Right lobe of liver (tissue), 6 donors: ENCODE measurements at regions of chr17 and their contacts with region 1.

Region 1: GRCh38 chr17:42405963-42406495 is 17.0 kb downstream of the CAVIN1 start:
- DNase-seq: peak; percentile 80 to 85 (median 82)
- ATAC-seq: peak; percentile 73 to 80 (median 76)
- H3K4me3 ChIP-seq: no peak overlapping the region
- H3K27ac ChIP-seq: no peak overlapping the region
- H3K4me1 ChIP-seq: peaks cover 0 to 12% (median 6%) of the 10 kb centered on the region in 4 donors
- H3K27me3 ChIP-seq: no peaks in the 10 kb centered on the region
- CTCF ChIP-seq: peak; percentile 79 to 90 (median 88)
- POLR2A ChIP-seq: no peak

Region 2: GRCh38 chr17:42312285-42313130 is 93.5 kb before region 1 on chr17:
- intact Hi-C with region 1: loop called in 1 of 2 experiments (anchors 10 kb)
- DNase-seq: peak; percentile 87 to 92 (median 88)
- ATAC-seq: peak; percentile 73 to 87 (median 80)
- H3K4me3 ChIP-seq: no peak overlapping the region
- H3K27ac ChIP-seq: peak overlapping the region in 2 of 3 donors; percentile 39 to 68
- H3K4me1 ChIP-seq: peaks cover 0 to 25% (median 11%) of the 10 kb centered on the region in 4 donors
- H3K27me3 ChIP-seq: no peaks in the 10 kb centered on the region
- CTCF ChIP-seq: peak; percentile 39 to 77 (median 67)
- POLR2A ChIP-seq: no peak

Region 3: DNA sequence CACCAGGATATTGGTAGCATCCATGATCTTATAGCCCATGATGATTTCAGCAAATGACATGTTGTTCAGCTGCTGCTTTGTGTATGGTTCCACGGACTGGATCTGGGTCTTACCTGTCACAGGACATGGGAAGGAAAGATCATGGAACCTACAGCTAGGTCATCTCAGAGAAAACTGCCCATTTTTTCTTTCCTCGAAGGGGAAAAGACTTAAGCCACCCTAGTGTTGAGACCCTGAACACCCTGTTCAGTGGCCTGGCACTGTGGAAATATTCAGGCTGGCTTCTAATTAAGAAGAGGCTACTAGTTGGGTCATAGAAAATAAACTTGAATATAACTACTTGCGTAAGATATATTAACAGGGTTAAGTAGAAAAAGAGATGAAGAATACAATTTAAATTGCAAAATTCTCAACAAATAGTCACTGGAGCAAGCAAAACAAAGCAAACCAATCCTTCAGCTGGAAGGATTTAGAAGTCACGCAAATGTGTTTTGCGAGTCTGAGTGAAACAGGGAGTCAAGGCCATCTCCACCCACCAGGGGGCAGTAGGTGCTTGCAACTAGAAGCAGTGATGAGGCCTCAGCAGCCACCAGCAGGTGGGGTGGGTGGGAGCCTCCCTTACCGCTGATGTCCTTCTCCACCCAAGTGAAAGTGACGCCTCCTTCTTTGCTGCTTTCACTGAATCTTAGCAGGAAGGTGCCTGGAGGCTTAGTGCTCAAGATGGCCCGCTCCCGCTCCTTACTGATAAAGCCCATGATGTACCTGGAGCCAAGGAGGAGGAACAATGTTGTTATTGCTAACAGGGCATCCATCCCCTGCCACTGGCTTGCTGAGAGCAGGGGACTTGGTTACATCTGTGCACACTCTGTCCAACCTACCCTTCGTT is 83.4 kb before region 1 on chr17:
- intact Hi-C with region 1: loop called (anchors 5 to 10 kb)
- DNase-seq: peak; percentile 86 to 91 (median 87)
- ATAC-seq: peak; percentile 84 to 97 (median 91)
- H3K4me3 ChIP-seq: no peak overlapping the region
- H3K27ac ChIP-seq: no peak overlapping the region
- H3K4me1 ChIP-seq: peaks cover 0 to 6% (median 0%) of the 10 kb centered on the region in 4 donors
- H3K27me3 ChIP-seq: no peaks in the 10 kb centered on the region
- CTCF ChIP-seq: peak; percentile 96 to 100 (median 100)
- POLR2A ChIP-seq: no peak

Region 4: GRCh38 chr17:42354956-42355843 is 50.8 kb before region 1 on chr17:
- intact Hi-C with region 1: no loop called
- DNase-seq: no peak
- ATAC-seq: no peak
- H3K4me3 ChIP-seq: no peak overlapping the region
- H3K27ac ChIP-seq: no peak overlapping the region
- H3K4me1 ChIP-seq: peaks cover 0 to 37% (median 11%) of the 10 kb centered on the region in 4 donors
- H3K27me3 ChIP-seq: no peaks in the 10 kb centered on the region
- CTCF ChIP-seq: no peak
- POLR2A ChIP-seq: no peak